Activated CD4-positive, alpha-beta T cell treated with anti-CD3 and anti-CD28 coated beads for 36 hours (primary cell): ENCODE measurements at regions of chr3 and their contacts with region 1.

Region 1: DNA sequence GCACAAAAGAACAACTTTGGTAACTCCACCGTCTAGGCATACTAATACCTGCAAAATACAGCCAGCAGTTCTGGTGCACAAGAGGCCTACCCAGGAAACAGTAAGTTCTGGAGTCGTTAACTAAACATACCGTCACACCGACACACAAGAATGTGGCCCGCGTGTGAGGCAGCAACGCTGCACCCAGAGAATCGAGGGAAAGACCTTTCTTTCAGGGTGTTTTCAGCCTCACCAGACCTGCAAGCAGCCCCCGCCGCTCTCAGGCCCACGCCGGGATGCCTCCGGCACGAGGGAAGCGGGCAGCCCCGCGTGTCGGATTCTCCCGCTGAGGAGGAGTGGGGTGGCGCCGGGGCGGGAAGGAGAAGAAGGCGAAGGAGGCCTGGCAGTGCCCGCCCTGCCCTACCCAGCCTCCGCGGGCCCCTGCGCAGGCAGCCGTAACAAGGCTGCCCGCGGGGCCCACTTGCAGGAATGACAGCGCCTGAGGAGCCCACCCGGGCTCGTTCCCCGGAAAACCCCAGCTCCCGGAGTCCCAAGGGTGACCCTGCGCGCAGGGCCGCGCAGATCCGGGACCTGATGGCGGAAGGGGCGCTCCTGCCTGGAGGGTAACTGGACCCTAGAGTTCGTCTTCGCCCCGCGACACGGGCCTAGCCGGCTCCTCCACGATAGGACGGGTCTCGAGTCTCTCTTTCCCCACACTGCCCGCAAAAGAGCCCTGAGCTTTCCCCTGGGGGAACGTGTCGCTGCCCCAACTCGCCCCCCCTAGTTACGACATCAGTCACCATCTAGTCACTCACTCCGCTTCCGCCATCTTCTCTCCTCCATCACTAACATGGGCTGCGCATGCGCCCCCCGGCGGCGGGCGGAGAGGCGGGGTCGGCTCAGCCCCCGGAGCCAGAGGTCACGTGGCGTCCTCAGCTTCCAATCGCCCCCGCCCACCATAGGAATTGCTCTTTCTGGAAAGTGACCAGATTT is at the start of gene PHC3:
- DNase-seq: peak; percentile 96
- ATAC-seq: peak; percentile 79
- H3K4me3 Mint-ChIP-seq: peak within 1 kb of the TSS; percentile 97
- H3K27ac Mint-ChIP-seq: peak within 1 kb of the TSS; percentile 99
- H3K4me1 Mint-ChIP-seq: peaks cover 21% of the 10 kb centered on the region
- H3K27me3 Mint-ChIP-seq: no peaks in the 10 kb centered on the region
- total RNA-seq, gene PHC3: 47.6 to 83.9 TPM

Region 2: DNA sequence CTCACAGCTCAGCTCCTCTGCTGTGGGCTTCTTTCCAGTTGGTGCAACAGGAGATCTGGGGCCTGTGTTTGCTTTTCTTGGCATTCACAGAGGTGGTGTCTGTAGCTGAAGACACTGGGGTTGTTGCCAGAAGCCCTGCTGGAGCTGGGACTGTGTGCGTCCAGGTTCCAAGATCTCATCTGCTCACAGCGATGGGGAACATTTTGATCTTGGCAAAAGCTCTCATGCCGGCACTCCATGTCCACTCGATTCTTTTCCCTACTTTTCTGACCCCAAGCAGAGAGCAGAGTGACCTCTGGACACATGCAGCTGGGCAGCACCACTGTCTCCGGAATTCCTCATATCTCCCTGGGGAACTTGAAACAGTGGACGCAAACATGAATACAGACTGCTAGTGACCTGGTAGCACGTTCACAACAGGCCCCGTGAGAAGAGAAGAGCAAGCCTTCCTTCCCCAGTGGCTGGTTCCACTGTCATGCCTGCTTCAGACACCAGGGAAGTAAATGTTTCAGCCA is 481.6 kb before region 1 on chr3:
- CTCF ChIA-PET with region 1: no interaction called
- POLR2A ChIA-PET with region 1: no interaction called
- intact Hi-C with region 1: no loop called
- DNase-seq: no peak
- ATAC-seq: no peak
- H3K4me3 Mint-ChIP-seq: no peak overlapping the region
- H3K27ac Mint-ChIP-seq: no peak overlapping the region
- H3K4me1 Mint-ChIP-seq: no peaks in the 10 kb centered on the region
- H3K27me3 Mint-ChIP-seq: peaks cover 18% of the 10 kb centered on the region

Region 3: DNA sequence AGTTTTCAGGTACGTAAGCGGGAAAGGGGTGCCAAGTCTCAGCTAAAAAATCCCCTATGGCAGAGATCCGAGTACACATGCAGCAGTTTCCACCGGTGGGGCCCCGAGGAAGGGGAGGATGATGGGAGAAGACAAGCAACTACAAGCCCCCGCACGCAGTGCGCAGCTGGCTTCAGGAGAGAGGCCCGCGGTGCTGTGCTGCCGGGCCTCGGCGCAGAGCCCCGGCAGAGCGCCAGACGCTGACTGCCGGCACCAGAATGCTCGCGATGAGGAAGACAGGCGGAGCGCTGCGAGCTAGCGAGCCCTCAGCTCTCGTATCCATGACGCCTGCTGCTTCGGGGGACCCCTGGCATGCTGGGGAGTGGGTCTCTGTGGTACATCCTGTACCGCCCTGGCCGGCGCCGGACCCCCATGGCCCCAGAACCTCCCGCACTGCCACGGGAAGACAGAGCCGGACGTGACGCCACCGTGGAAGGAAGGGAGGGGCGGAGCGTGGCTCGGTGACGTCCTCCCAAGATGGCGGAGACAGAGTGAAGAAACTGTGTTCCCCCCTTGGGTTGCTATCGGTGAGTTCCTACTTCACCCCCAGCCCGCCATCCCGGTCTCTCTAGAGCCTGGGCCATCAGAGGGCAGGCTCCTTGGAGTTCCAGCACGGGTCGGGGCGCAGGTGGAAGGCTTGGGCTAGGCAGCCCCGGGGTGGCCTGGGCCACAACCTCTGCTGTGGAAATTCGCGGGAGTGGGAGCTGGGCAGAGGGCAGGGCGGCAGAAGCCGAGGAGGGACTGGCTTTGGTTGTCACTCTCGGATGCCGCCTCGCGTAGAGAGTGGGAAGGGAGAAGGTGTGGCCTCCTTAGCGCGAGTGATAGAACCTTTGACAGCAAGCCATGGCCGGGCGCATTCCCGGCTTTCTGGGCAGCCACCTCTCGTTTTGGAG is 408.0 kb before region 1 on chr3 and contains the start of gene MYNN:
- CTCF ChIA-PET with region 1: interaction called, 3 read pairs
- POLR2A ChIA-PET with region 1: no interaction called
- intact Hi-C with region 1: loop called (anchors 1 to 2 kb)
- DNase-seq: peak; percentile 95
- ATAC-seq: peak; percentile 80
- H3K4me3 Mint-ChIP-seq: peak within 1 kb of the TSS; percentile 99
- H3K27ac Mint-ChIP-seq: peak within 1 kb of the TSS; percentile 100
- H3K4me1 Mint-ChIP-seq: peaks cover 45% of the 10 kb centered on the region
- H3K27me3 Mint-ChIP-seq: no peaks in the 10 kb centered on the region
- total RNA-seq, gene MYNN: 13.6 to 14.2 TPM

Region 4: DNA sequence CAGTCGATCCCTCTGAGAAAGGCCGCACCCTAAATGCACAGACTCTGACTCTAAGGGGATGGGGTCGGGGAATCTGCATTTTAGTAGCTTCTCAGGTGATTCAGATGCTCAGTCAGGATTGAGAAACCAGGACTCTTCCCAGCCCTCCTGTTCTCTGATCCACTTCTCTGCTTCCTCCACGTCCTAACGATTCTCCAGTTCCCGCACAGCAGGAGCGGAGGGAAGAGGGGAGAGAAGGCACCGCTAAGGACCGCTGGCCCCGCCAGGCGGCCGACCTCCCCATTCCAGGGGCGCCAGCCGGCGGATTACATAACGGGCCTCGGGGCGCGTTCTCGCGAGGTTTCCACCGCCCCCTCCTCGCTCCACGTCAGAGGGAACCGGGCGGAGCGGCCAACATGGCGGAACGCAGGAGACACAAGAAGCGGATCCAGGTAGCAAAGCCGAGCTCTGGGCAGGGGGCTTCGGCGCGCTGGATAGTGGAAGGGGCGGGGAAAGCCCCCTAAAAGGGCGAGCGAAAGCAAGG is 214.7 kb before region 1 on chr3 and contains the start of gene SEC62:
- CTCF ChIA-PET with region 1: no interaction called
- POLR2A ChIA-PET with region 1: no interaction called
- intact Hi-C with region 1: loop called in 1 of 2 experiments (anchors 2 kb)
- DNase-seq: peak; percentile 97
- ATAC-seq: peak; percentile 85
- H3K4me3 Mint-ChIP-seq: peak within 1 kb of the TSS; percentile 83
- H3K27ac Mint-ChIP-seq: peak within 1 kb of the TSS; percentile 95
- H3K4me1 Mint-ChIP-seq: peaks cover 62% of the 10 kb centered on the region
- H3K27me3 Mint-ChIP-seq: no peaks in the 10 kb centered on the region
- total RNA-seq, gene SEC62: 62.8 to 74.7 TPM

Region 5: DNA sequence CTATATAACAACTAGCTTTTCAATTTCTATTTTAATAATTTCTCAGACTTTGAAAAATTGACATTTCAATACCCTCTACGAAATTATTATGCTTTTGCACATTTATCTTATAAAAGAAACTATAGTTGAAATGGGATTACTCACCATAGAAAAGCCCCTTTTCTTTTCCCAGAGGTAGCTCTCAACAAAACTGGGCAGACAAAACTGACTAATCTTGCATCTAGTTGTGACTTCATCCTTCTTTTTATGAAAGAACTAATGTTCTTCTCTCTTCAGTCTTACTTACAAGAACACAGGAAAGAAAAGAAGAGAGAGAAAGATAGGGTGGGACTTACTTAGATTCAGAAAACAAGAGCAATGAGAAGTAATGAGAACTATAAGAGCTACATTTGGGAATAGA is 82.4 kb before region 1 on chr3:
- CTCF ChIA-PET with region 1: no interaction called
- POLR2A ChIA-PET with region 1: interaction called, 4 read pairs
- intact Hi-C with region 1: loop called in 1 of 2 experiments (anchors 5 kb)
- DNase-seq: no peak
- ATAC-seq: peak; percentile 86
- H3K4me3 Mint-ChIP-seq: no peak overlapping the region
- H3K27ac Mint-ChIP-seq: peak overlapping the region; percentile 85
- H3K4me1 Mint-ChIP-seq: peaks cover 26% of the 10 kb centered on the region
- H3K27me3 Mint-ChIP-seq: no peaks in the 10 kb centered on the region

Region 6: DNA sequence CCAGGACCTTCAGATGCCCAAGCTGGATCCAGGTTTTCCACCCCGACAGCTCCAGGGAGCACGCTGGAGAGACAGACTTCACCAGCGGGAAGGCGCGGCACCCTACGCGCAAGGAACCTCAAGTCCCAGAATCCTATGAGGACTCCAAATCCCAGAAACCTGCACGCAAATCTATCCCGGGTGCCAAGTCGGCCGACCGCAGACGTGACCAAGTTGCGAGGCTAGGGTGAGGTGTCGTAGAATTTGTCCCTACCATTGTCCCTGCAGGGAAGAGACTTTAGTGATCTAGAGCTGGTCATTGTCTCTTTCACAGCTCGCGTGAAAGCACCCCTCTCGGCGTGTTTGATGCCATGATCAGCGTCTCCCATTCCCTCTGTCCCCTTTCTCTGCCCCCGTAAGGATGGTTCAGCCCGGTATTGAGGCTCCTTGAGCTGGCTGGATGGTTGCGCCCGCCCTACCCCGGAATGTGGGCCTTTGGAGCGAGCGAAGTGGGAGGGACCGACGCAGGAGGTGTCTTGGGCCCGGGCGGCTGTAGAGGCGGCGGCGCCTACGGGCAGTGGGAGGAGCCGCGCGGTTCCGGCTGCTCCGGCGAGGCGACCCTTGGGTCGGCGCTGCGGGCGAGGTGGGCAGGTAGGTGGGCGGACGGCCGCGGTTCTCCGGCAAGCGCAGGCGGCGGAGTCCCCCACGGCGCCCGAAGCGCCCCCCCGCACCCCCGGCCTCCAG is 40.9 kb after region 1 on chr3 and contains the start of gene PRKCI:
- CTCF ChIA-PET with region 1: interaction called, 3 read pairs
- POLR2A ChIA-PET with region 1: interaction called, 4 read pairs
- intact Hi-C with region 1: loop called (anchors 1 to 2 kb)
- DNase-seq: peak; percentile 95
- ATAC-seq: peak; percentile 95
- H3K4me3 Mint-ChIP-seq: peak within 1 kb of the TSS; percentile 89
- H3K27ac Mint-ChIP-seq: peak within 1 kb of the TSS; percentile 95
- H3K4me1 Mint-ChIP-seq: peaks cover 32% of the 10 kb centered on the region
- H3K27me3 Mint-ChIP-seq: no peaks in the 10 kb centered on the region
- total RNA-seq, gene PRKCI: 32.3 to 33.0 TPM

Region 7: GRCh38 chr3:170811928-170812591 is 630.9 kb after region 1 on chr3:
- CTCF ChIA-PET with region 1: no interaction called
- POLR2A ChIA-PET with region 1: no interaction called
- intact Hi-C with region 1: loop called in 1 of 2 experiments (anchors 10 kb)
- DNase-seq: peak; percentile 77
- ATAC-seq: peak; percentile 88
- H3K4me3 Mint-ChIP-seq: no peak overlapping the region
- H3K27ac Mint-ChIP-seq: no peak overlapping the region
- H3K4me1 Mint-ChIP-seq: peaks cover 4% of the 10 kb centered on the region
- H3K27me3 Mint-ChIP-seq: no peaks in the 10 kb centered on the region